Endothelial cell of umbilical vein (primary cell): ENCODE measurements at regions of chr18 and their contacts with region 1.

Region 1: DNA sequence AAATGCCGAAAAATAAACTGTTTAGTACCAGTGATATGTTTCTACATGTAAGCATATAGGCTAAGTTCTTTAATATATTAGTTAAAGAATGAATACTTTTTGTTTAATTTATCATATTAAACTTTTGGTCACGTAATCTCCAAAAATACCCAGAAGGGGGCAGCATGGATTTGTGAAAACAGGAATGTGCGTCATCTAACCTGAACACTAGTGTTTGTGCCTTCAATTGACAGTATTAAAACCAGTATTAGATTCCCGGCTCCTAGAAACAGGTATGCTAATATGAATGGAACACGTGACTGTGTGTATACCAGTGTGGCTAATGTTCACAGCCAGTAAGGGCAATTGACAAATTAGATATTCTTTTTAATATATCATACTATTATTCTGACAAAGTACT is 51.8 kb downstream of the WDR7 start:
- DNase-seq: peak; percentile 59
- H3K4me3 ChIP-seq: no peak overlapping the region
- H3K27ac ChIP-seq: no peak overlapping the region
- H3K4me1 ChIP-seq: no peaks in the 10 kb centered on the region
- H3K27me3 ChIP-seq: no peaks in the 10 kb centered on the region
- CTCF ChIP-seq: peak; percentile 27 to 28
- POLR2A ChIP-seq: no peak

Region 2: DNA sequence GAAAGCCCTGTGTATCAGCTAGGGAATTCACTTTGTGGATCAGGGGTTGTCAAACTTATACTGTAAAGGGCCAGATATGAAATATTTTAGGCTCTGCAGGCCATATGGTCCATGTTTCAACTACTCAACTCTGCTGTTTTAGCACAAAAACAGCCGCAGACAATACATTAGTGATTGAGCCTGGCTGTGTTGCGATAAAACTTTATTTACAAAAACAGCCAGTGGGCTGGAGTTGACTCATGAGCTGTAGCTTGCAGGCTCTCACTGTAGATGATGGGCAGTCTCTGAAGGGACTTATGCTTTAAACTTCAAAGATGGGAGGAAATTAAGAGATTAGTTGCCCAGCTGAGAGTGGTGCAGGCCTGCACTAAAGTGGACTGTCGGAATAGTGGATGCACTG is 18.7 kb before region 1 on chr18:
- CTCF ChIA-PET with region 1: interaction called, 17 read pairs
- POLR2A ChIA-PET with region 1: no interaction called
- dilution Hi-C with region 1: no loop called
- intact Hi-C with region 1: no loop called
- DNase-seq: no peak
- H3K4me3 ChIP-seq: no peak overlapping the region
- H3K27ac ChIP-seq: no peak overlapping the region
- H3K4me1 ChIP-seq: no peaks in the 10 kb centered on the region
- H3K27me3 ChIP-seq: no peaks in the 10 kb centered on the region
- CTCF ChIP-seq: no peak
- POLR2A ChIP-seq: no peak

Region 3: GRCh38 chr18:57446322-57446721 is 743.4 kb after region 1 on chr18:
- CTCF ChIA-PET with region 1: interaction called, 9 read pairs
- POLR2A ChIA-PET with region 1: no interaction called
- dilution Hi-C with region 1: no loop called
- intact Hi-C with region 1: loop called (anchors 2 kb)
- DNase-seq: no peak
- H3K4me3 ChIP-seq: no peak overlapping the region
- H3K27ac ChIP-seq: no peak overlapping the region
- H3K4me1 ChIP-seq: no peaks in the 10 kb centered on the region
- H3K27me3 ChIP-seq: peaks cover 30 to 39% of the 10 kb centered on the region in 2 experiments
- CTCF ChIP-seq: peak; percentile 48 to 76
- POLR2A ChIP-seq: no peak